GM10248 (cell line): ENCODE measurements at regions of chr17 and their contacts with region 1.

Region 1: DNA sequence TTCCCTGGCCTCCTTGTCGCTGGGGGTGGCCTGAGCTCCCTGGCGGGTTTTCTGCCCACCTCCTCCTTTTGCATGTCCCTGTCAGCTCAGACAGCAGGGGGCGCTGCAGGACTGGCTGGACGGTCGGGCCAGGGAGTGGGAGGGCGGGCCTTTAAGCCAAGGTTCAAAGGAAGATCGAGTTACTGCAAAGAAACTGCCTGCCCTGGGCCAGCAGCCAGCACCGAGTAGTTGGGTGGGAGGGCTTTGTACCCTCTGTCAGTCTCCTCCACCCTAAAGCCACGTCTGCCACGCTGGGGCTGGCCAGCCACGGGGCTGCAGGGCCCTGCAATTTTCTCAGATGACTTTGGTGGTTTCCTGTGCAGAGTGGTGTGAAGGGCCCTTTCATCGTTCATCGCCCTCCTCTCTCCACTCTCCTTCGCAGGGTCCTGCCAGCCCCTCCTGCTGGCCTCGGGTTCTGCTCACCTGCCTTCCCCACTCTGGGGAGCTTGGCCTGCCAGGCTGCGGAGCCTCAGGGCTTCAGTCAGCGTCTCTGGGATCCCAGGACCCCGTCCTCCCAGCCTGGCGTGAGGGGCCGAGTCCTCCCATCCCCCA is 12.3 kb downstream of the GPR142 start:
- DNase-seq: peak; percentile 92
- CTCF ChIP-seq: peak; percentile 97

Region 2: DNA sequence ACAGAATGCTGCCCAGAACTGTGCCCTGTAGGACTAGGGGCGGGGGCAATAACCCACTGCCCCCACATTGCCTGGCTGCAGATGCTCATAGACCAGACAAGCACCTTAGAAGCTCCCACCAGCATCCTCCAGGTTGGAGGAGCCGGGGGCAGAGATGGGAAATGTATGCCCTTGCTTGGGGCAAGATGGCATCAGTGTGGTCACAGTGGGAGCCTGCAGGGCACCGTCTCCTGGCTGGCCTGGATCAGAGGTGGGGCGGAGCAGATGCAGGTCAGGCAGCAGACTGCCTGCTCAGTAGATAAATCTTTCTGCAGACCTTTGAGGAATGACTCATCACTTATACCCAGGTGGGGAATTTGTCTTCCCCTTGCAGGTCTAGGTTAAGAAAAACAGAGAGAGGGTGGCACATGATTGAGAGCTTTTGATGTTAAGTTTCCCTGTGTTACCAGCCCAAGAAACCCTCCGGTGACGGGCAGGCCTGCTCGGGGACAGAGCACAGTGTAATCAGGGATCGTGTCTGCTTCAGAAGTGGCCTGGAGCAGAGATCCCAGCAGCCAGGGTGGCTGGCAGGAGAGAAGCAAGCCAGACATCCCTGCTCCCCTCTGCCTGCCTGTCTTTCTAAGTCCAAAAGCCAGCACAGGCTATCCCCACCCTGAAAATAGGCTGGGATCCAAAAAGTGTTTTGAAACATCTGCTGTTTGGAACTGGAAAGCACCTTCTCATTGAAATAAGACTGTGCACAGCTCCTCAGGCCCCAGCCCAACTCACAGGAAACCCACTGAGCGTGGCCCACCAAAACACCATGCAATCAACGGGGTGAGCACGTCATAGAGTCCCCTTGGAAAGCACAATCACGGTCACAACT is 226.8 kb before region 1 on chr17:
- CTCF ChIA-PET with region 1: no interaction called
- POLR2A ChIA-PET with region 1: no interaction called
- DNase-seq: no peak
- CTCF ChIP-seq: no peak

Region 3: GRCh38 chr17:74316220-74316619 is 63.4 kb before region 1 on chr17:
- CTCF ChIA-PET with region 1: no interaction called
- POLR2A ChIA-PET with region 1: no interaction called
- DNase-seq: no peak
- CTCF ChIP-seq: no peak

Region 4: DNA sequence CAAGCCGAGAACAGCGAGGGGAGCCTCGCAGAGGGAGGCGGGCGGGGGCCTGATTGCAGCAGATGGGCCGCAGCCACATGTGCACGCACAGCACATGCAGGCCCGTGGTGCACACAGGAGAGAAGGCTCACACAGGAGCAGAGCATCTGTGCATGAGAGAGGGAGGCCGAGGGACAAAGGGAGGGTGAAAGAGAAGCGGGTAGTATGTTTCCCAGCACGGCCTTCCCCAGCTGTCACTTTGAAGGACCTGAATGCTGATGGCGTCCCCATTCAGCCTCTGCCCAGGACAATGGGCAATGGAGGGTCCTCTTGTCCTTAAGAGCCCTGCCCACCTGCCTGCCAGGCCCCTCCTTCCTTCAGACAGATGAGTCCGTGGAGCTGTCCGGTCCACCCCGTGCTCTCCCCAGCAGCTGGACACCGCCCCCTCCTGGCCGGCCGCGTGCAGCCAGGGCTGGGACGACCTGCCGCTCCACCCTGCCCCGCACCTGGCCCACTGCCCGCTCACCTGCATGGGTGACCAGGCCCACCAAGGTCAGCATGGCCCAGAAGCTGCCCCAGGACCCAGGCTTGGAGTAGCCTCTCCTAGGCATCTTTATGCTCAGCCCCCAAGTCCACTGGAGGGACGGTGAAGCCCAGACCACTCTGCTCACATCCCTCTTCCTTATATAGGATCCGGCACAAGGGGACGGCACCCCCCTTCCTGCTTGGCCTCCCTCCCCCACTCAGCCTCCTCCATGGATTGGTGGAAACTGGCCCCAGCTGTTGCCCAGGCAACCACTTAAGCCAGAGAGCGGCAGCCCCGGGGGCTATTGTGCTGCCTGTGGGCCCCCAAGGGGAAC is 18.1 kb before region 1 on chr17 and contains the start of gene BTBD17:
- CTCF ChIA-PET with region 1: interaction called, 50 read pairs
- POLR2A ChIA-PET with region 1: no interaction called
- DNase-seq: peak; percentile 65
- CTCF ChIP-seq: peak; percentile 62

Region 5: GRCh38 chr17:74442670-74443515 is 63.3 kb after region 1 on chr17:
- CTCF ChIA-PET with region 1: interaction called, 24 read pairs
- POLR2A ChIA-PET with region 1: no interaction called
- DNase-seq: peak; percentile 80
- CTCF ChIP-seq: no peak

Region 6: DNA sequence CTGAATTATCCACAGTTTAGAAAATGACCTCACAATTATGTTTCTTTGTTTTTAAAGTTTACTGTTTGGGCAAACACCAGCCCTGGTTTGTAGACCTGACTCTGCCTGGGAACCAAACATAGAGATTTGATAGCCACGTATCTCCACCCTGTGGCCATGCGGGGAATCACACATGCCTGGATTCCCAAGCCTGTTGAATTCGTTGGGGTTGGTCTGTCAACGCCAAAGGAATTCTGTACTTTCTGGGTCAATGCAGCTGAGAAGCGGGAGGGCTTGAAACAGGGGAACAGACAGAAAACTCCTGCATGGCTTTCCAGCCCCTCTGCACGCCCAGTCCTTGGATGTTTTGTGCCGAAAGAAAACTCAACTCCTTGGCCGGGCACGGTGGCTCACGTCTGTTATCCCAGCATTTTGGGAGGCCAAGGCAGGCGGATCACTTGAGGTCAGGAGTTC is 113.8 kb after region 1 on chr17:
- CTCF ChIA-PET with region 1: interaction called, 42 read pairs
- POLR2A ChIA-PET with region 1: no interaction called
- DNase-seq: peak; percentile 76
- CTCF ChIP-seq: peak; percentile 92

Region 7: DNA sequence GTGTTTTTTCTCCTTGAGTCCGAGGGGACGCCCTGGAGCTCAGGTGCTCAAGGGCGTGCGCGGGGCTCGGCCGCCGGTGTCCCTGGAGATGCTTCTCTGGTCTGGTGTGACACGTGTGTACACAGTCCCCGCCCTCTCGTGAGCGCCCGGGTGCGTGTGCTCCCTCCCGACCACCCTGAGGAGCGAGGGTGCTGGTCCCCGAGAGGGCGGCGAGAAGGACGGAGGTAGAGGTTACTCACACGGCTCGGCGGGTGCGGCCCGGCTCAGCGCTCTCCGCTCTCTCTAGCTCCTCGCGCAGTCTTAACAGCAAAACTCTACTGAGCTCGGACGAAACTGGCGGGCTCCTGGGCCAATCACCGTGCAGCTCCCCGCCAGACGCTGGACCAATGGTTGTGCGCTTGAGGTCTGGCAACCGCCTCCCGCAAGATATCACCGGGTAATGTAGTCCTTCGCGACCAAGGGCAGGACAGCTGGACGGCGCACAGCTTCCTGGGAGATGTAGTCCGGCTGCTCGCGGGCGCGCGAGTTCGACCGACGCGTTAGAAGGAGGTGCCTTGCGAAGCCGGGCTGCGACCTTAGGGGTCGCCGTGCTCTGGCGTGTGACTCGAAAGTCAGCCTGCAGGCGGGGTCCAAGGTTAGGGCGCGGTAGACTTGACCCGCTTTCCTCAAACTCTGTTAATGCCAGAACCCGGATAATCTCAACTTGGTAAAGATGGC is 909.7 kb after region 1 on chr17 and contains the start of gene SLC25A19:
- CTCF ChIA-PET with region 1: no interaction called
- POLR2A ChIA-PET with region 1: interaction called, 10 read pairs
- DNase-seq: peak; percentile 97
- CTCF ChIP-seq: peak; percentile 49